Left ventricle myocardium inferior (tissue), 1 donor: ENCODE measurements at regions of chr5 and their contacts with region 1.

Region 1: DNA sequence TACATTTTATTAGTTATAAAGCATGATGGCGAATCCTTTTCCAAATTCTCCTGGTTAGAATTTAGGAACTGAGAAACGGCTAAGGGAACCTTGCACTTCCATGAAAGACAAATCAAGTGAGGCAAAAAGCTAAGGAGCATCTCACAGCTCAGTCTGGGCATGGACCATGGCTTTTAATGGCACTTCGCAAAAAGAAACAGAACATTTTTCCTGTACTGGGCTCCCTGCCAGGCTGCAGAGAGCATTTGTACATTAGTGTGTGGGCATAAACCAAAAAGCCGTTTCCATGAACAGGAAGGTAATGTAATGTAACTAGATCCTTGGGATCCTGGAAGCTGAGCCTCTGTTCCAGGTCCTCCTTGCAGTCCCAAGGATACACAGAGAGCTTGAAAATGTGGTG is 354.2 kb downstream of the MRPS30 start:
- DNase-seq: no peak
- H3K4me3 ChIP-seq: no peak overlapping the region
- H3K27ac ChIP-seq: no peak overlapping the region
- H3K4me1 ChIP-seq: peaks cover 6% of the 10 kb centered on the region
- H3K27me3 ChIP-seq: no peaks in the 10 kb centered on the region
- CTCF ChIP-seq: no peak

Region 2: DNA sequence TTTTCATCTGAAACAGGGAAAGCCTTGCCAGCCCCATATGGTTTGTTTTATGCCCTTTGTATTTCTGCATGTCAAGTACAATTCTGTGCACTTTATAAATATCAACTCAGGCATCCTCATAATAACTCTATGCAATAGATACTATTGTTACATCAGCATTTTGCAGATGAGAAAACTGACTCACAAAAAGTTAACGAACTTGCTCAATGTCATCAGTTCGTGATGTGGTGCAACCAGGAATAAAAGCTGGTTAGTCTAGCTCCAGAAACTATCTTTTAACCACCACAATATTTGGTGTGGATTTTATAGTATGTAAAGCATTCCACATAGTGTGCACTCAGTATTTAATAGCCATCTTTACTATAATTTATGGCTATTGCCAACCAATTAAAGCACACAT is 219.3 kb before region 1 on chr5:
- intact Hi-C with region 1: no loop called
- DNase-seq: no peak
- H3K4me3 ChIP-seq: no peak overlapping the region
- H3K27ac ChIP-seq: no peak overlapping the region
- H3K4me1 ChIP-seq: no peaks in the 10 kb centered on the region
- H3K27me3 ChIP-seq: no peaks in the 10 kb centered on the region
- CTCF ChIP-seq: no peak

Region 3: GRCh38 chr5:45262046-45262590 is 99.1 kb after region 1 on chr5:
- intact Hi-C with region 1: no loop called
- DNase-seq: no peak
- H3K4me3 ChIP-seq: no peak overlapping the region
- H3K27ac ChIP-seq: no peak overlapping the region
- H3K4me1 ChIP-seq: no peaks in the 10 kb centered on the region
- H3K27me3 ChIP-seq: no peaks in the 10 kb centered on the region
- CTCF ChIP-seq: no peak

Region 4: DNA sequence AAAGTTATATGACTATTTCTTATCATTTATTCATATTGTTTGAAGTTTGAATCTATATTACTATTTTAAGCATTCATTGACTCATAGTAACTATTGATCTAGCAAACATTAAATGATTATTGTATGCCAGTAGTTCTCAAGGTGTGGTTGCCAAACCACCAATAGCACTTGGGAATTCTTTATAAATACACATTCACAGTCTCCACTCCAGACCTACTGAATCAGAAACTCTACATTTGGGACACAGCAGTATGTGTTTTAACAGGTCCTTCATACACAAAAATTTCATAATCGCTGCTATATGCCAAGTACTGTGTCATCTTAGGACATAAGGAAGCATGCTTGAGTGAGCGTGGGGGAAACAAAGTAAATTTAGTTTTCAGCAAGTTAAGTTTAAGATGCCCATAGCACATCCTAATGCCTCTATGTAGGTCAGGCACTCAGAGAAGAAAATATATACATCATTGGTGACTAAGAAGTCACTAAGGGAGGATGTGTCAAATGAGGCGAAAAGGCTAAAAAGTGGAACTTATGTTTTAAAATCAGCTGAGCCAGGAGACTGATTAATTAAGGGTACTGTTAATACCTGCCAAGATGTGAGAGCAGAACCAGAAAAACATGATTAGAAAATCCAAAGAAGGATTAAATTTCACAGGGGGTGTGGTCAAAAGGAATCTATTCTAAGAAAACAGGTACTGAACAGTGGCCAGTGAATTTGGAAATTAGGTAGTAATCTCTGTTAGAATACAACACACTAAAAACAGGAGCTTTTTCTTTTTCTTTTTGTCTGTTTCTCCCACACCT is 192.4 kb after region 1 on chr5:
- intact Hi-C with region 1: no loop called
- DNase-seq: no peak
- H3K4me3 ChIP-seq: no peak overlapping the region
- H3K27ac ChIP-seq: no peak overlapping the region
- H3K4me1 ChIP-seq: no peaks in the 10 kb centered on the region
- H3K27me3 ChIP-seq: no peaks in the 10 kb centered on the region
- CTCF ChIP-seq: no peak

Region 5: DNA sequence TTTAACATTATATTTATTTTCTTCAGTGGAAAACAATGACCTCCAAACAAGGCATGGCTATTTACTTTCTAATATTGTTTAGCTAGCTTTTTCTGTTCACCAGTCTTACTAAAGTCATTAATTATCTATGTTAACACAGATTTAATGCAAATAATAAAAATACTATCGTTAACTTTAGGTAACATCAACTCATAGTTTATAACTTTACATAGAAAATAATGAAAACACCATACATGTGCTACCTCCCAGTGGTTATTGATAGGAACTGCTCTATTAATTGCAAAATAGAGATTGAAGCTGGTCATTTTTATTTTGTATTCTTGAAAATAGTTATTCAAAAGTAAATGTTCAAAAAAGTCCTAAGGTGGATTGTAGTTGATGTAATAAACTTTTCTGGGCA is 611.6 kb after region 1 on chr5:
- intact Hi-C with region 1: loop called (anchors 10 kb)
- DNase-seq: no peak
- H3K4me3 ChIP-seq: no peak overlapping the region
- H3K27ac ChIP-seq: no peak overlapping the region
- H3K4me1 ChIP-seq: no peaks in the 10 kb centered on the region
- H3K27me3 ChIP-seq: no peaks in the 10 kb centered on the region
- CTCF ChIP-seq: peak; percentile 49